ENCODE measurements at regions of chr9 and their contacts with region 1.

Region 1: DNA sequence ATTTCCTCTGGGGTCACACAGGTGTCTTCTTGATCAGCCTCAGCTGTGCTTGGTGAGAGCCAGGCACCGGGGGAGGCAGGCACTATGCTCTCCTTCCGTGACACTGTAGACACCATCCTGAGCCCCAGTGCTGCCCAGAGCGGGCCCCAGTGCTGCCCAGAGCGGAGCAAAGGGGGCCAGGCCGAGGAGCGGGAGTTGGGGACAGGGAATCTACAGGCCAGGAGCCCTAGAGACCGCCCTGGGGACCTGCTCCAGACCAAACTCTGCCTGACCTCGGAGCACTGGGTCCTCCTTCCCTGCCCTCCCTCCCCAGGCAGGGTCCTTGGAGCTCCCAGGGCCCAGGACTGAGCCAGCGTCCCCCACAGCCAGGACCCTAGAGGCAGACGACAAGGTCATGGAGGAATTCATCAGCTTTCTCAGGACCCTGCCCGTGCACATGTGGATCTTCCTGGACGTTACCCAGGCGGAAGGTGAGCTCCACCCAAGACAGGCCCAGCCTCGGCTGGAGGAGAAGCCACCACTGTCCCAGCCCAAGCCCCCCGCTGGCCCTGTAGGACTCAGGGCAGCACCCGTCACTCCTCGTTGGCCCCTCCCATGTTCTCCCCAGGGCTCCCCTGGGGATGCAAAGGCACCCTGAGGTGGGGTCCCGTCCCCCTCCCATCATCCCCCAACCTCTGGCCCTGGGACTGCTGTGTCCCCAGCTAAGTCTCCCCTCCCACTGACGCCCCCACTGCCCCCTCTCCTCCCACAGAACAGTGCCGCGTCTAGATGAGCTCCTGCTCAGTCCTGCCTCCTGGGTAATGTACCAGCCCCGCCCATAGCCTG is 30.2 kb downstream of the PAEP start:
- DNase-seq: no peak
- ATAC-seq: no peak
- H3K4me3 ChIP-seq: no peak overlapping the region
- H3K4me3 Mint-ChIP-seq: no peak overlapping the region
- H3K27ac ChIP-seq: no peak overlapping the region
- H3K27ac Mint-ChIP-seq: no peak overlapping the region
- H3K4me1 ChIP-seq: no peaks in the 10 kb centered on the region
- H3K4me1 Mint-ChIP-seq: no peaks in the 10 kb centered on the region
- H3K27me3 ChIP-seq: peaks cover 0 to 6% (median 0%) of the 10 kb centered on the region in 4 experiments
- H3K27me3 Mint-ChIP-seq: peaks cover 18% of the 10 kb centered on the region
- CTCF ChIP-seq: no peak

Region 2: GRCh38 chr9:135624282-135624681 is 32.6 kb after region 1 on chr9:
- CTCF ChIA-PET with region 1: no interaction called
- POLR2A ChIA-PET with region 1: no interaction called
- intact Hi-C with region 1: loop called (anchors 1 kb)
- DNase-seq: no peak
- ATAC-seq: no peak
- H3K4me3 ChIP-seq: no peak overlapping the region
- H3K4me3 Mint-ChIP-seq: no peak overlapping the region
- H3K27ac ChIP-seq: no peak overlapping the region
- H3K27ac Mint-ChIP-seq: no peak overlapping the region
- H3K4me1 ChIP-seq: no peaks in the 10 kb centered on the region
- H3K4me1 Mint-ChIP-seq: no peaks in the 10 kb centered on the region
- H3K27me3 ChIP-seq: no peaks in the 10 kb centered on the region
- H3K27me3 Mint-ChIP-seq: peaks cover 8% of the 10 kb centered on the region
- CTCF ChIP-seq: no peak

Measured in B cell (primary cell).